ENCODE measurements at regions of chr11 and their contacts with region 1.

Region 1: GRCh38 chr11:124758317-124759203 is 3.5 kb downstream of the ESAM start:
- DNase-seq: peak; percentile 73
- H3K4me3 Mint-ChIP-seq: peak overlapping the region; percentile 28
- H3K27ac Mint-ChIP-seq: no peak overlapping the region
- H3K4me1 Mint-ChIP-seq: peaks cover 23% of the 10 kb centered on the region
- H3K27me3 Mint-ChIP-seq: peaks cover 57% of the 10 kb centered on the region

Region 2: DNA sequence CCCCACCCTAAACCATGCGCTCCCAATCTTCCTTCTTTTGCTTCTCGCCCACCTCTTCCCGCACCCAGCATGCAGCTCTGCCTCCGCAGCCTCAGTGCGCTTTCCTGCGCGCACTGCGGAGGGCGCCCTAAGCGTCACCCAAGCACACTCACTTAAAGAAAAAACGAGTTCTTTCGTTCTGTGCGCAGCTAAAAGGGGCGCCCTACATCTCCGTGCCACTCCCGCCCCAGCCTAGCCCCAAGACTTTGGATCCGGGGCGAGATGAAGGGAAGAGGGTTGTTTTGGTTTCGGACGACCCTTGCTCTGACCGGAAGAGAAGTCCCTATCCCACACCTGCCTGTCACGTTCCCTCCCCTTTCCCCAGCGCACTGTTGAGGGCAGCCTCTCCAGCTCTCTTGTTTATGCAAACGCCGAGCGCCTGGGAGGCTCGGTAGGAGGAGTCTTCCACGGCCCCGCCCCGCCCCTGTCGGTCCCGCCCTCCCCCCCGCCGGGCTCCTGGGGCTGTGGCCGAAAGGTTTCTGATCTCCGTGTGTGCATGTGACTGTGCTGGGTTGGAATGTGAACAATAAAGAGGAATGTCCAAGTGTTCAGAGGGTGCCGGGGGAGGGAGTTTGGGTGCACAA is 11.8 kb before region 1 on chr11:
- CTCF ChIA-PET with region 1: interaction called, 60 read pairs
- POLR2A ChIA-PET with region 1: interaction called, 8 read pairs
- DNase-seq: peak; percentile 83
- H3K4me3 Mint-ChIP-seq: peak overlapping the region; percentile 95
- H3K27ac Mint-ChIP-seq: peak overlapping the region; percentile 89
- H3K4me1 Mint-ChIP-seq: peaks cover 32% of the 10 kb centered on the region
- H3K27me3 Mint-ChIP-seq: peaks cover 8% of the 10 kb centered on the region

Region 3: GRCh38 chr11:124784051-124784450 is 25.5 kb after region 1 on chr11:
- CTCF ChIA-PET with region 1: interaction called, 12 read pairs
- POLR2A ChIA-PET with region 1: no interaction called
- DNase-seq: no peak
- H3K4me3 Mint-ChIP-seq: no peak overlapping the region
- H3K27ac Mint-ChIP-seq: no peak overlapping the region
- H3K4me1 Mint-ChIP-seq: no peaks in the 10 kb centered on the region
- H3K27me3 Mint-ChIP-seq: no peaks in the 10 kb centered on the region

Region 4: GRCh38 chr11:124793466-124794278 is 35.1 kb after region 1 on chr11:
- CTCF ChIA-PET with region 1: interaction called, 40 read pairs
- POLR2A ChIA-PET with region 1: interaction called, 15 read pairs
- DNase-seq: no peak
- H3K4me3 Mint-ChIP-seq: no peak overlapping the region
- H3K27ac Mint-ChIP-seq: no peak overlapping the region
- H3K4me1 Mint-ChIP-seq: peaks cover 41% of the 10 kb centered on the region
- H3K27me3 Mint-ChIP-seq: no peaks in the 10 kb centered on the region

Region 5: DNA sequence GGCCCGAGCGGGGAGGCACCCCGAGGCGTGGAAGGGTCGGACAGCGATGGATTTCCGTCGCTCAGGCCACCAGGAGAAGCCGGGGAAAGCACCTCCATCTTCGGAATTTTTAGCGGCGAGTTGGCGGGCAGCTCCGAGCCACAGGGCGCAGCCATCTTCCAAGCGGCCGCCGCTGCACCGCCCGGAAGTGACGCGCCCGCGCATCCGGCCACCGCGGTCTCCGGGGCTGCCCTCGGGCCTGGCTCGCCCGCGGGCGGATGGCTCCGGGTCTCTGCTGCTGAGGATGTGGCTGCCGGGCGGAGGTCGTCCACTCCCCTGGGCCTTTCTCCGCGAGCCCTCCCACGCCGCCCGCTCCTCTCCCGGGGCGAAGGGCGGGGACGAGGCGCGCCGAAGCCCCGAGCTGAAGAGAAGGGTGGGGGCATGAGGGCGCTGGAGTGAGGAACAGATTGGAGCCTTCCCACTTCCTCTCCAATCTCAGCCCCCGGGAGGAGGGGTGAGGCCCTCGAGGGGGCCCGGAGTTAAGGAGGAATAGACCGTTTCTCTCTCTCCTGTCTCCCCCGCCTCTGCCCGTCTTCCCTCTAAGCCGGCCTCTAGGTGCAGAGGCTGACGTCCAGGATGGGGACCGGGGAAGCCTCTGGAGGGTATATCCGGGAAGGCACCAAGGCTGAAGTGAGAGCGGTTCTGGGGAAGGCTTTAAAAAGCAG is 41.8 kb after region 1 on chr11 and contains the start of gene MSANTD2:
- CTCF ChIA-PET with region 1: interaction called, 40 read pairs
- POLR2A ChIA-PET with region 1: interaction called, 15 read pairs
- DNase-seq: peak; percentile 86
- H3K4me3 Mint-ChIP-seq: peak within 1 kb of the TSS; percentile 88
- H3K27ac Mint-ChIP-seq: peak within 1 kb of the TSS; percentile 89
- H3K4me1 Mint-ChIP-seq: peaks cover 38% of the 10 kb centered on the region
- H3K27me3 Mint-ChIP-seq: peaks cover 2% of the 10 kb centered on the region
- total RNA-seq, gene MSANTD2: 9.4 to 10.4 TPM

Measured in activated CD4-positive, alpha-beta memory T cell treated with anti-CD3 and anti-CD28 coated beads, Interleukin-2, amount 10 ng/mL, durations not matched to agents 7 days and 5 days (primary cell).